ENCODE measurements at regions of chr15 and their contacts with region 1.

Region 1: GRCh38 chr15:33188641-33189257 is 5.8 kb downstream of the FMN1 start:
- DNase-seq: peak; percentile 32
- ATAC-seq: peak; percentile 79
- H3K4me3 ChIP-seq: 0 out of 2 replicates have a peak overlapping the region, but pooled peaks have one; percentile 30
- H3K27ac ChIP-seq: peak overlapping the region; percentile 6; the same call in 1 of the 2 replicates
- H3K4me1 ChIP-seq: peaks cover 27% of the 10 kb centered on the region
- H3K27me3 ChIP-seq: peaks cover 0 to 5% of the 10 kb centered on the region in 2 experiments; a peak in 2 of 4 replicates
- CTCF ChIP-seq: no peak
- EP300 ChIP-seq: no peak
- POLR2A ChIP-seq: no peak
- RAD21 ChIP-seq: no peak

Region 2: GRCh38 chr15:33168444-33168843 is 20.3 kb before region 1 on chr15:
- CTCF ChIA-PET with region 1: interaction called, 4 read pairs
- POLR2A ChIA-PET with region 1: no interaction called
- RAD21 ChIA-PET with region 1: no interaction called
- SMC1A ChIA-PET with region 1: no interaction called
- in situ Hi-C with region 1: no loop called
- intact Hi-C with region 1: loop called (anchors 2 kb)
- DNase-seq: peak; percentile 27
- ATAC-seq: peak; percentile 76
- H3K4me3 ChIP-seq: no peak overlapping the region
- H3K27ac ChIP-seq: no peak overlapping the region
- H3K4me1 ChIP-seq: peaks cover 4% of the 10 kb centered on the region; the same call in 1 of the 2 replicates
- H3K27me3 ChIP-seq: no peaks in the 10 kb centered on the region; a peak in 1 of 4 replicates
- CTCF ChIP-seq: no peak
- EP300 ChIP-seq: peak in 1 of 2 experiments; percentile 47; a peak in 1 of 4 replicates
- POLR2A ChIP-seq: no peak
- RAD21 ChIP-seq: no peak

Region 3: DNA sequence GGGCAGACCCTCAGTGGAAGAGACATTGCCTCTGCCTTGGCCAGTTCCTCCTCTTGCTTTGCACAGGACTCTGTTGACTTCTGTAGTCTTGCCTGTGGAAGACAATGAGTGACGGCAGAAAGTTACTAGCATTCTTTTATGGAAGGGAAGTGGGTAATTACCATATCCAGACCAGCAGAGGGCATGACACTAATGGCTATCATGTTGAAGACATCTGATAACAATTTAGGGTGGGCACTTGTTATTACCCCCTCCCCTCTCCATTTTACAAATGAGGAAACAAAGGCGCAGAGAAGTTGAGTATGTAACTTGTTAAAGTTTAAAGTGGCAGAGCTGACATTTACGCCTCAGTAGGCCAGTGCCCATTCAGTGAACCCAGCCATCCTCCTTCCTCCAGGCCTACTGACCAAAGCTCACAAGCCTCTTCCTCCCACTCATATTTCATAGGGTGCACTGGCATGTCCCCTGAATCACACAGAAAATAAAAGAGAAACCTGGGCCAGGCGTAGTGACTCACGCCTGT is 54.0 kb after region 1 on chr15:
- CTCF ChIA-PET with region 1: no interaction called
- POLR2A ChIA-PET with region 1: no interaction called
- RAD21 ChIA-PET with region 1: no interaction called
- SMC1A ChIA-PET with region 1: no interaction called
- in situ Hi-C with region 1: no loop called
- intact Hi-C with region 1: no loop called
- DNase-seq: no peak
- ATAC-seq: peak; percentile 54
- H3K4me3 ChIP-seq: no peak overlapping the region
- H3K27ac ChIP-seq: no peak overlapping the region
- H3K4me1 ChIP-seq: peaks cover 5% of the 10 kb centered on the region
- H3K27me3 ChIP-seq: no peaks in the 10 kb centered on the region; a peak in 1 of 4 replicates
- CTCF ChIP-seq: peak; percentile 26 to 49 (median 43); a peak in 3 of 6 replicates
- EP300 ChIP-seq: no peak
- POLR2A ChIP-seq: no peak
- RAD21 ChIP-seq: peak; percentile 9; the same call in 1 of the 2 replicates